Natural killer cell (primary cell): ENCODE measurements at regions of chr1 and their contacts with region 1.

Region 1: GRCh38 chr1:22052115-22053016 is at the start of gene CDC42:
- DNase-seq: peak; percentile 98
- ATAC-seq: peak; percentile 87 to 99 (median 91)
- H3K4me3 ChIP-seq: peak within 1 kb of the TSS; percentile 87
- H3K4me3 Mint-ChIP-seq: peak within 1 kb of the TSS; percentile 97
- H3K27ac ChIP-seq: peak within 1 kb of the TSS; percentile 89
- H3K27ac Mint-ChIP-seq: peak within 1 kb of the TSS; percentile 96
- H3K4me1 ChIP-seq: peaks cover 34% of the 10 kb centered on the region
- H3K4me1 Mint-ChIP-seq: peaks cover 45 to 61% of the 10 kb centered on the region in 2 donors
- H3K27me3 ChIP-seq: no peaks in the 10 kb centered on the region
- H3K27me3 Mint-ChIP-seq: no peaks in the 10 kb centered on the region
- CTCF ChIP-seq: no peak
- total RNA-seq, gene CDC42: 454 to 470 (median 463) TPM

Region 2: GRCh38 chr1:22025368-22026155 is 26.8 kb before region 1 on chr1:
- intact Hi-C with region 1: loop called (anchors 1 kb)
- DNase-seq: peak; percentile 80 to 94
- ATAC-seq: peak; percentile 71 to 88 (median 82)
- H3K4me3 ChIP-seq: peak overlapping the region; percentile 59
- H3K4me3 Mint-ChIP-seq: peak overlapping the region; percentile 91
- H3K27ac ChIP-seq: peak overlapping the region; percentile 85
- H3K27ac Mint-ChIP-seq: peak overlapping the region; percentile 95 to 97
- H3K4me1 ChIP-seq: peaks cover 28% of the 10 kb centered on the region
- H3K4me1 Mint-ChIP-seq: peaks cover 36 to 38% of the 10 kb centered on the region in 2 donors
- H3K27me3 ChIP-seq: no peaks in the 10 kb centered on the region
- H3K27me3 Mint-ChIP-seq: no peaks in the 10 kb centered on the region
- CTCF ChIP-seq: no peak

Region 3: DNA sequence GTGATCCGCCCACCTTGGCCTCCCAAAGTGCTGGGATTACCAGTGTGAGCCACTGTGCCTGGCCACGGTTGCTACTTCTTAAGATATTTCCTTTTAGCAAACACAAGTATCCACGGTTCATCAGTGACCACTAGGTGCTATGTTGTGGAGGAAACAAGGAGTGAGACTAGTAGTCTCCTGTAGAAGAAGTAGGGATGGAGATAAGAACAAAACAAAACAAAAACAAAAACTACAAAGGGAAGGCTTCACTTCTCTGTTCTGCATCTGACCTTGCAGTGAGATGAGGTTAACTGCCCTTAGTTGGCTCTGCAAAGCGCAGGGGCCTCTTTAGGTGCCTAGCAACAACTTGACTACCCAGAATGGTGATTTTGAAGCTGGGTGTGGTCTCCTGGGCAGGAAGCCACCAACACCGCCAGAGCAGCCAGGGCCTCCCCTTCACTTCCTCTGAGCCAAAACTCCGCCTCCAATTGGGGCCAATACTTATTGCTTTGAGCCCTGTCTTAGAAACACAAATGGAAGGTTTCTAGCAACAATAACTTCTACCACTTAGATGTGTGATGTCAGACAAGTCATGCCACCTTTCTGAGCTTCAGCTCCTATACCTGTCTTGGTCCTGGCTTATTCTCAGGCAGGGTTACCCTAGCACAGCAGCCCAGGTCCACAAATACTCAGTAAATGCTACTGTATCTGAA is 12.6 kb before region 1 on chr1:
- intact Hi-C with region 1: loop called (anchors 1 kb)
- DNase-seq: peak; percentile 81 to 98
- ATAC-seq: peak; percentile 95 to 99 (median 98)
- H3K4me3 ChIP-seq: peak overlapping the region; percentile 19
- H3K4me3 Mint-ChIP-seq: peak overlapping the region; percentile 77
- H3K27ac ChIP-seq: peak overlapping the region; percentile 91
- H3K27ac Mint-ChIP-seq: peak overlapping the region; percentile 95 to 96
- H3K4me1 ChIP-seq: peaks cover 44% of the 10 kb centered on the region
- H3K4me1 Mint-ChIP-seq: peaks cover 40% of the 10 kb centered on the region in 2 donors
- H3K27me3 ChIP-seq: no peaks in the 10 kb centered on the region
- H3K27me3 Mint-ChIP-seq: no peaks in the 10 kb centered on the region
- CTCF ChIP-seq: no peak

Region 4: DNA sequence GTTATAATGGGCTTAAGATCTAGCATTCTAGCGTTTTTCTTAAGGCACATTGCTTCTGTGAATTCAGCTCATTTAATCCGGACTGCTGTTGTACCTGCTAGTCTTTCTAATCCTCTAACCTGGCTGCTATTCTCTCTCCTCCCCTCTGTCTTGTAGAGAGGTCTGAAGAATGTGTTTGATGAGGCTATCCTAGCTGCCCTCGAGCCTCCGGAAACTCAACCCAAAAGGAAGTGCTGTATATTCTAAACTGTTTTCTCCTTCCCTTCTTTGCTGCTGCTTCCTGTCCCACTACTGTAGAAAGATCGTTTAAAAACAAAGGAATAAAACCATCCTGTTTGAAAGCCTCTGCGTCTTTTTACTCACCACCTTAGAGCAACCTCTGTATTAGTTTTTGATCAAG is 37.4 kb after region 1 on chr1:
- intact Hi-C with region 1: loop called (anchors 5 kb)
- DNase-seq: peak in 1 of 2 donors; percentile 36
- ATAC-seq: peak in 1 of 3 donors; percentile 18
- H3K4me3 ChIP-seq: no peak overlapping the region
- H3K4me3 Mint-ChIP-seq: peak overlapping the region; percentile 68
- H3K27ac ChIP-seq: peak overlapping the region; percentile 32
- H3K27ac Mint-ChIP-seq: peak overlapping the region; percentile 81 to 85
- H3K4me1 ChIP-seq: peaks cover 12% of the 10 kb centered on the region
- H3K4me1 Mint-ChIP-seq: peaks cover 85 to 87% of the 10 kb centered on the region in 2 donors
- H3K27me3 ChIP-seq: no peaks in the 10 kb centered on the region
- H3K27me3 Mint-ChIP-seq: no peaks in the 10 kb centered on the region
- CTCF ChIP-seq: no peak

Region 5: GRCh38 chr1:22105611-22106207 is 53.3 kb after region 1 on chr1:
- intact Hi-C with region 1: loop called (anchors 1 kb)
- DNase-seq: peak in 1 of 2 donors; percentile 72
- ATAC-seq: peak; percentile 61 to 69 (median 65)
- H3K4me3 ChIP-seq: no peak overlapping the region
- H3K4me3 Mint-ChIP-seq: peak overlapping the region; percentile 51
- H3K27ac ChIP-seq: peak overlapping the region; percentile 68
- H3K27ac Mint-ChIP-seq: peak overlapping the region; percentile 90
- H3K4me1 ChIP-seq: peaks cover 23% of the 10 kb centered on the region
- H3K4me1 Mint-ChIP-seq: peaks cover 77 to 79% of the 10 kb centered on the region in 2 donors
- H3K27me3 ChIP-seq: no peaks in the 10 kb centered on the region
- H3K27me3 Mint-ChIP-seq: no peaks in the 10 kb centered on the region
- CTCF ChIP-seq: peak; percentile 86

Region 6: DNA sequence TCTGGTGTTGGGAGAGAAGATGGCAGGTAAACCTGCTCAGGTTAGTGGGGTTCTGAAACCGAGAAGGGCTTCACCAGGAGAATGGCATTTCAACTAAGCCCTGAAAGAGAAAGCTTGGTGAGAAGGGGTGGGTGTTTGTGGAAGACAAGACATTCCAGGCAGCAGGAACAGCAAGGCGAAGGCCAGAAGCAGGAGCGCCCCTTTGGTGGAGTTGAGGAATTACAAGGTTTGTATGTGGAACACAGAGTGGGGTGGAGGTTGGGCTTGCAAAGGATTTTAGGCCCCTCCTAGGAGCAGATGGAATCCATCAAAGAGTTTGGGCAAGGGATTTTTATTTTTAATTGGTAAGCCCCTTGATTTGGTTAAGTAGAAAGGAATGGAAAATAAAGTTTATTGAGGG is 1666.1 kb after region 1 on chr1:
- intact Hi-C with region 1: no loop called
- DNase-seq: no peak
- ATAC-seq: no peak
- H3K4me3 ChIP-seq: no peak overlapping the region
- H3K4me3 Mint-ChIP-seq: no peak overlapping the region
- H3K27ac ChIP-seq: no peak overlapping the region
- H3K27ac Mint-ChIP-seq: no peak overlapping the region
- H3K4me1 ChIP-seq: peaks cover 5% of the 10 kb centered on the region
- H3K4me1 Mint-ChIP-seq: peaks cover 5 to 6% of the 10 kb centered on the region in 2 donors
- H3K27me3 ChIP-seq: no peaks in the 10 kb centered on the region
- H3K27me3 Mint-ChIP-seq: no peaks in the 10 kb centered on the region
- CTCF ChIP-seq: no peak